ENCODE measurements at regions of chr9 and their contacts with region 1.

Region 1: DNA sequence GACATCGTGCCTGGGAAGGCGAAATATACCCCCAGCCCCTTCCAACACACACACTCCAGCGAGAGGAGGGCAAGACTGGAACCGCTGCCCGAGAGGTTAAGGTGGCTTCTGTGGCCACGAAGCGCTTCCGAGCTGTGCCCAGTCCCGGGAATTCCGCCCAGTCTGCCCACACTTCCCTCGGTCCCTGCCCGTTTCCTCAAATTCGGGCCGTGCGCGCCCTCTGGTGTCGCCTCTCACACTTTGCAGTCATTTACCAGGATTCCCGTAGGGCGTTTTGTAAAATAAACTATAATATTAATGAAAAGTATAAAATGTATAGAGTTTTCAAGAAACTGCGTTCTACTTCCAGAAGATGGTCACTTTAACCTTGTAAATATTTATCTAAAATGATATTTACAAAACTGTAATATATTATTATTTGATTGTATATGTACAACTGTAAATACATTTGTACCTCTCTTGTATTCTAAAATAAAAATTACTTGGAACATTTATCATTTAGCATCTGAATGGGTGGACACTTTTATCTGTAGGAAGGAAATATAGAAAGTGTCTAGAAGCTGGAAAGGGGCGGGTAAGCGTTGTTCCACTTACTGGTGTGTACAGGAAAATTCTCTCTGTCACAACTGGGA is 11.0 kb upstream of the EXOSC2 start:
- DNase-seq: peak; percentile 63 to 83
- H3K4me3 ChIP-seq: peak overlapping the region; percentile 76
- H3K27ac ChIP-seq: no peak overlapping the region
- H3K4me1 ChIP-seq: peaks cover 6% of the 10 kb centered on the region
- H3K27me3 ChIP-seq: no peaks in the 10 kb centered on the region
- CTCF ChIP-seq: peak; percentile 84

Region 2: DNA sequence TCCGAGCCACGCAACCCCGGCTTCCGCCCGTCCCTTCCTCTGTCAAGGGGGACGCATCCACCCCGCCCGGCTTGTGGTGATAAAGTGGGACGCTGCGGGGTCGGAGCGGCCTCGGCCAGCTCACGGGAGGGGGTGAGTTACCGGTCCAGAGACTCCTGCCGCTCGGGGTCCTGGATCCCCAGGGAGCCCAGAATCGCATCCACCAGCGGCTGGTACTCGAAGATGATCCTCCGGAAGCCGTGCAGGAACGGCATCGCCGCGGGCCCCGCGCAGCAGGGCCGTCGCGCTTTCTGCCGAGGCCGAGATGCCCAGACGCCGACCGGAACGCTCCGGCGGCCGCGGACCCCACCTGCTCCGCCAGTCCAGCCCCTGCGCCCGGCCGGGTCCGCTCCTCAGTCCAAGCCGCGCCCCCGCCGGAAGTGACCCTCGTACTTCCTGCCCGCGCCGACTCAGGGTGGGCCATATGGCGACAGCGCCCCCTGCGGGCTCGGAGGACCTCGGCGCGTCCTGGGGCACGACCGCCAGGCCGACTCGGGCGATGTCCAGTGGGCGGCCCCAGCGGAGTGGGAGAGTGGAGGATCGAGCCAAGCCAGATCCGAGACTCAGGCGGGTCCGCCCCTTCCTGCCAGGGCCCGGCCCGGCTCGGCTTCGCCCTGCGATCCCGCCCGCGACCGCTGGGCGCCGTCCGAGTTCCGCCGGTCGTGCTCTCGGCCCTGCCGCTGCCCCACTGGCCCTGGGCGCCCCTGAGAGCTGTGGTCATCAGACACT is 1040.7 kb before region 1 on chr9 and contains the start of gene ASB6:
- CTCF ChIA-PET with region 1: no interaction called
- POLR2A ChIA-PET with region 1: no interaction called
- intact Hi-C with region 1: loop called (anchors 5 kb)
- DNase-seq: peak; percentile 81 to 100
- H3K4me3 ChIP-seq: peak within 1 kb of the TSS; percentile 96
- H3K27ac ChIP-seq: no peak within 1 kb of the TSS
- H3K4me1 ChIP-seq: peaks cover 8% of the 10 kb centered on the region
- H3K27me3 ChIP-seq: no peaks in the 10 kb centered on the region
- CTCF ChIP-seq: peak; percentile 96
- total RNA-seq, gene ASB6: 19.3 and 20.2 TPM in 2 replicates

Region 3: DNA sequence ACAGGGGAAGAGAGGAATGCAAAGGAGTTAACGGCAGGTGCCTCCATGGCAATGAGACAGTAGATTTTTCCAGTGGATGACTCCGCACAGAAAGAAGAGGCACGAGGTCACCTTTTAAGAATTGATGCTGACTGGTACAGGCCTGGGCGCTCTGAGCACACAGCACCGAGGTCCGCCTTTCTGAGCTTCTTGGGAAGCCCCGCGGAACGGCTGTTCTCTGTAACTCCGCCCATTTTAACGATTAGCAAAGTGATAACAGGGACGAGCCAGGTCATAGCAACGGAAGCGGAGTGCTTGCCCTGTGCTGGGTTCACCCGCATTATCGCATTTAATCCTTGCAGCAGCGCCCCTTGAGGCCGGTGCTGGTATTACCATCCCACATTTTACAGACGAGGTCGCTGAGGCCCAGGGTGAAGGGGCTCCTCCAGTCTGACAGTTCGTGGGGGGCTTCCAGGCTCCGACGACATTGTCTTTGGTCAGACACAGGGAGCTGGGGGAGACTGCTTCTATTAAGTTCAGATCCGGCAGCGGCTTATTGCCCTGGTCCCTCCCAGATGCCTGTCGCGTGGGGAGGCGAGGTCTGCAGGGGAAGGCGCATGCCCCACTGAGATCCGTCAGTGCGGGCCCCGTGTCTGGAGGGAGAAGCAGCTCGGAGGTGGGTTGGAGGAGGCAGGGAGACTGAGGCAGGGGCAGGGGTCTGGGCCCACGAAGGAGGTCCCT is 439.4 kb before region 1 on chr9:
- CTCF ChIA-PET with region 1: interaction called, 6 read pairs
- POLR2A ChIA-PET with region 1: no interaction called
- intact Hi-C with region 1: loop called (anchors 1 kb)
- DNase-seq: peak in 1 of 2 experiments; percentile 70
- H3K4me3 ChIP-seq: no peak overlapping the region
- H3K27ac ChIP-seq: no peak overlapping the region
- H3K4me1 ChIP-seq: no peaks in the 10 kb centered on the region
- H3K27me3 ChIP-seq: no peaks in the 10 kb centered on the region
- CTCF ChIP-seq: peak; percentile 98

Region 4: GRCh38 chr9:130480331-130481072 is 202.1 kb before region 1 on chr9:
- CTCF ChIA-PET with region 1: interaction called, 14 read pairs
- POLR2A ChIA-PET with region 1: no interaction called
- intact Hi-C with region 1: no loop called
- DNase-seq: no peak
- H3K4me3 ChIP-seq: no peak overlapping the region
- H3K27ac ChIP-seq: no peak overlapping the region
- H3K4me1 ChIP-seq: no peaks in the 10 kb centered on the region
- H3K27me3 ChIP-seq: no peaks in the 10 kb centered on the region
- CTCF ChIP-seq: peak; percentile 24; the same call in 1 of the 2 replicates

Region 5: DNA sequence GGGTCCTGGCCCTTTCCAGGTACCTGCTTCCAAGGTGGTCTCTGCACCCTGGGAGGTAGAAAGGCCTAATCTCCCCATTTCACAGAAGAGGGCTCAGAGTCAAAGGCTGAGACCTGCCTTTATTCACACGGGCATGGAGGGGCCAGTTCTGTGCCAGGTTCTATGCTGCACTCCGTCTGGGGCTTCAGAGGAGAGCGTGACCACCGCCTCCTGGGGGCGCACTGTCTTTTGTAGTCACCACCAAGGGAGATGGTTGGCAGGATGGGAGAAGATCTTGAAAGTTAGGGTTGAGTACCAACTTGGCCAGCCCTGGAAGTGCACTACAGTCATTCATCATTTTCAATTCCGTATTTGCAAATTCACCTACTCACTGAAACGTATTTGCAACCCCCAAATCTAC is 41.9 kb before region 1 on chr9:
- CTCF ChIA-PET with region 1: no interaction called
- POLR2A ChIA-PET with region 1: interaction called, 17 read pairs
- intact Hi-C with region 1: no loop called
- DNase-seq: no peak
- H3K4me3 ChIP-seq: no peak overlapping the region
- H3K27ac ChIP-seq: no peak overlapping the region
- H3K4me1 ChIP-seq: no peaks in the 10 kb centered on the region
- H3K27me3 ChIP-seq: no peaks in the 10 kb centered on the region
- CTCF ChIP-seq: no peak